B cell (primary cell): ENCODE measurements at regions of chr9 and their contacts with region 1.

Region 1: DNA sequence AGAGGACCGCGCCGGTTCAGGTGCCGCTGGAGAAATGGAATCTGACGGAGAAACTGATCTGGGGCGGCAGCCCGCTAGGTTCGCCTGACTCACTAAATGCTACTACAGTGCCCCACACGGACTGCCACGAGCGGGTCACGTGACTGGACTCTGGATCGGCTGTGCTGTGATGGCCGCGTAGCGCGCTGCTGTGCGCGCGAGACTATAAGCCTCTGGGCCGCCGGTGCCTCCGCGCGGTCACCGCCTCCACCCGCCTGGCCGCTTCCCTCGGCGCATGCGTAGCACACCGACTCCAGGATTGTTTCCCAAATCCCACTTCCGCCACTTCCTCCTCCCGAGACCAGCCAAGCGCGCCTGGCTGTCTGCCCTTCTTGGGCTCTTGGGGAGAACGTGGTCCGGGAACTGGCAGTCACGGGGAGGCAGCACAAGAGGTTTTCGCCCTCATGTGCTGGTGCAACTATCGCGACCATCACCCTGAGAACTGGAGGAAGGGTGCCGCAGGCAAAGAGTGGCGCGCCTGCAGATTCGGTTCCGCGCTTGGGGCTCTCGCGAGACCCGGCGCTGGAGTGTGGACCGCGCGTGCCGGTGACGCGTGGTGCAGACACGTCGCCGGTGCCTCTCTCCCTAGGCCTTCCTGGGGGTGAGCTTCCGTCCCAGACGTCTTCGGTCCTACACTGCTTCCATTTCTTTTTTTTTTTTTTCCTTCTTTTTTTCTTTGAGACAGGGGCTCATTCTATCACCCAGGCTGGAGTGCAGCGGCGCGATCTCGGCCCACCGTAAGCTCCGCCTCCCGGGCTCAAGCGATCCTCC is 35.8 kb upstream of the GLDC start:
- DNase-seq: peak; percentile 96
- ATAC-seq: peak; percentile 73
- H3K4me3 ChIP-seq: peak overlapping the region; percentile 69 to 89 (median 77)
- H3K4me3 Mint-ChIP-seq: peak overlapping the region; percentile 98
- H3K27ac ChIP-seq: peak overlapping the region; percentile 93 to 97
- H3K27ac Mint-ChIP-seq: peak overlapping the region; percentile 100
- H3K4me1 ChIP-seq: peaks cover 32 to 48% of the 10 kb centered on the region in 2 donors
- H3K4me1 Mint-ChIP-seq: peaks cover 29% of the 10 kb centered on the region
- H3K27me3 ChIP-seq: no peaks in the 10 kb centered on the region
- H3K27me3 Mint-ChIP-seq: no peaks in the 10 kb centered on the region
- CTCF ChIP-seq: no peak

Region 2: GRCh38 chr9:6015278-6016157 is 665.8 kb before region 1 on chr9 and contains the start of gene RANBP6:
- CTCF ChIA-PET with region 1: no interaction called
- POLR2A ChIA-PET with region 1: no interaction called
- intact Hi-C with region 1: loop called (anchors 1 kb)
- DNase-seq: peak; percentile 91
- ATAC-seq: peak; percentile 100
- H3K4me3 ChIP-seq: peak within 1 kb of the TSS; percentile 64 to 100 (median 73)
- H3K4me3 Mint-ChIP-seq: peak within 1 kb of the TSS; percentile 98
- H3K27ac ChIP-seq: peak within 1 kb of the TSS; percentile 65 to 83
- H3K27ac Mint-ChIP-seq: peak within 1 kb of the TSS; percentile 95
- H3K4me1 ChIP-seq: peaks cover 7 to 15% of the 10 kb centered on the region in 2 donors
- H3K4me1 Mint-ChIP-seq: peaks cover 34% of the 10 kb centered on the region
- H3K27me3 ChIP-seq: no peaks in the 10 kb centered on the region
- H3K27me3 Mint-ChIP-seq: no peaks in the 10 kb centered on the region
- CTCF ChIP-seq: no peak
- total RNA-seq, gene RANBP6: 25.0 and 25.9 TPM in 2 replicates

Region 3: DNA sequence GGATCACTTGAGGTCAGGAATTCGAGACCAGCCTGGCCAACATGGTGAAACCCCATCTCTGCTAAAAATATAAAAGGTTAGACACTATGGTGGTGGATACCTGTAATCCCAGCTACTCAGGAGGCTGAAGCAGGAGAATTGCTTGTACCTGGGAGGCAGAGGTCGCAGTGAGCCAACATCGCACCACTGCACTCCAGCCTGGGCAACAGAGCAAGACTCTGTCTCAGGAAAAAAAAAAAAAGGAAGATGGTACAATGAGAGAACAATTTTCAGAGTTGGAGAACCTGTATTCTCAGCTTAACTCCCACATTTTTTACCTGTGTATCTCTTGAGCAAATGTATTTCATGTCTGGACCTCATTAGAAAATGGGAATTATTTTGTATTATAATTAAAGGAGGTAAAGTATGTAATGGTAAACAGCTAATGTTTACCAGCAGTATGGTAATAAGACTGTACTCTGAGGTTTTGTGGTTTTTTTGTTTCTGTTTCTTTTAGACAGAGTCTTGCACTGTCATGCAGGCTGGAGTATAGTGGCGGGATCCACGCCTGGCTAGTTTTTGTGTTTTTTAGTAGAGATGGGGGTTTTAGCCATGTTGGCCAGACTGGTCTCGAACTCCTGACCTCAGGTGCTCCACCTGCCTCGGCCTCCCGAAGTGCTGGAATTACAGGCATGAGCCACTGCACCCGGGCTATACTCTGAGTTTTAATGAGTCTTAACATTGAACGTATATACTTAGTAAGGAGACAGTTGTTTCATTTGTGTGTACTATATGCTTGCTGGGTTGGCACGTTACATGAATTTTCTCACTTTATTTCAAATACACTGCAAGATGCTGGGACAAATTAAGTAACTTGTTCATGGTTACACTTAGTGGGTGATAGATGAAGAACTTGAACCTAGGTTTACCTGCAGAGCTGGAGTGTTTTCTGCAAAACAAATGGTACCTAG is 252.1 kb before region 1 on chr9:
- CTCF ChIA-PET with region 1: no interaction called
- POLR2A ChIA-PET with region 1: no interaction called
- intact Hi-C with region 1: loop called (anchors 5 kb)
- DNase-seq: peak; percentile 67
- ATAC-seq: peak; percentile 87
- H3K4me3 ChIP-seq: no peak overlapping the region
- H3K4me3 Mint-ChIP-seq: peak overlapping the region; percentile 67
- H3K27ac ChIP-seq: peak overlapping the region; percentile 37 to 60
- H3K27ac Mint-ChIP-seq: peak overlapping the region; percentile 87
- H3K4me1 ChIP-seq: peaks cover 51 to 59% of the 10 kb centered on the region in 2 donors
- H3K4me1 Mint-ChIP-seq: peaks cover 82% of the 10 kb centered on the region
- H3K27me3 ChIP-seq: no peaks in the 10 kb centered on the region
- H3K27me3 Mint-ChIP-seq: no peaks in the 10 kb centered on the region
- CTCF ChIP-seq: no peak

Region 4: GRCh38 chr9:6605202-6605601 is 76.2 kb before region 1 on chr9:
- CTCF ChIA-PET with region 1: no interaction called
- POLR2A ChIA-PET with region 1: no interaction called
- intact Hi-C with region 1: no loop called
- DNase-seq: peak; percentile 63
- ATAC-seq: peak; percentile 94
- H3K4me3 ChIP-seq: peak overlapping the region in 2 of 5 experiments; percentile 16 to 26
- H3K4me3 Mint-ChIP-seq: peak overlapping the region; percentile 76
- H3K27ac ChIP-seq: no peak overlapping the region
- H3K27ac Mint-ChIP-seq: no peak overlapping the region
- H3K4me1 ChIP-seq: peaks cover 15% of the 10 kb centered on the region in 2 donors
- H3K4me1 Mint-ChIP-seq: peaks cover 16% of the 10 kb centered on the region
- H3K27me3 ChIP-seq: no peaks in the 10 kb centered on the region
- H3K27me3 Mint-ChIP-seq: no peaks in the 10 kb centered on the region
- CTCF ChIP-seq: no peak

Region 5: DNA sequence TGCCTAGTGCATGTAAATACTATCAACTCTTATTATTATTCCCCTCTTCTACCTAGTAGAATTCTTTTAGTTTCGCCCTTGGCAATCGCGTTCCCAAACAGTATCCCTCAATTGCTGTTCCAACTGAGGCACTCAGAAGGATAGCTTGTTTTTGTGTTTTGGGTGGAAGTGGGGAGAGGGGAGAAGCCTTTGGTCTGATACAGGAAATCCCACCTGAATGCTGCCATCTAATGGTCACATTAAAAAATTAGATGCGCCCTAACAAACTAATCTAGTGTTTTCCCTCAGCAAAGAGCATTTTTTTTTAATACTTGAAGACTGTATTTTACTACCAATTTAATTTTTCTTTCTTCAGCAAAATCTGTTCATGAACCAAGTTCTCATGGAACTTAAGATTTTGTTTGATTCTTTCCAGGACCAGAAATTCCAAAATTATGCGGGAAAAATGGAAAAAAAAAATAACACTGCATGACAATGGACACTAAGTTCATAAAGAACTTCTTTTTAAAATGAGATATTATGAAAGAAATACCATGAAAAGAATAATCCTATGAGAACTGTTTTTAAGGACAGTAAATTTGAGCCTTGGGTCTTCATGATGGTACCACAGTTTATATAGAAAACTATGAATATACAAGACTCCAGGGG is 13.6 kb before region 1 on chr9:
- CTCF ChIA-PET with region 1: interaction called, 15 read pairs
- POLR2A ChIA-PET with region 1: no interaction called
- intact Hi-C with region 1: no loop called
- DNase-seq: peak; percentile 59
- ATAC-seq: peak; percentile 33
- H3K4me3 ChIP-seq: no peak overlapping the region
- H3K4me3 Mint-ChIP-seq: no peak overlapping the region
- H3K27ac ChIP-seq: no peak overlapping the region
- H3K27ac Mint-ChIP-seq: no peak overlapping the region
- H3K4me1 ChIP-seq: no peaks in the 10 kb centered on the region
- H3K4me1 Mint-ChIP-seq: peaks cover 4% of the 10 kb centered on the region
- H3K27me3 ChIP-seq: no peaks in the 10 kb centered on the region
- H3K27me3 Mint-ChIP-seq: no peaks in the 10 kb centered on the region
- CTCF ChIP-seq: peak; percentile 75

Region 6: DNA sequence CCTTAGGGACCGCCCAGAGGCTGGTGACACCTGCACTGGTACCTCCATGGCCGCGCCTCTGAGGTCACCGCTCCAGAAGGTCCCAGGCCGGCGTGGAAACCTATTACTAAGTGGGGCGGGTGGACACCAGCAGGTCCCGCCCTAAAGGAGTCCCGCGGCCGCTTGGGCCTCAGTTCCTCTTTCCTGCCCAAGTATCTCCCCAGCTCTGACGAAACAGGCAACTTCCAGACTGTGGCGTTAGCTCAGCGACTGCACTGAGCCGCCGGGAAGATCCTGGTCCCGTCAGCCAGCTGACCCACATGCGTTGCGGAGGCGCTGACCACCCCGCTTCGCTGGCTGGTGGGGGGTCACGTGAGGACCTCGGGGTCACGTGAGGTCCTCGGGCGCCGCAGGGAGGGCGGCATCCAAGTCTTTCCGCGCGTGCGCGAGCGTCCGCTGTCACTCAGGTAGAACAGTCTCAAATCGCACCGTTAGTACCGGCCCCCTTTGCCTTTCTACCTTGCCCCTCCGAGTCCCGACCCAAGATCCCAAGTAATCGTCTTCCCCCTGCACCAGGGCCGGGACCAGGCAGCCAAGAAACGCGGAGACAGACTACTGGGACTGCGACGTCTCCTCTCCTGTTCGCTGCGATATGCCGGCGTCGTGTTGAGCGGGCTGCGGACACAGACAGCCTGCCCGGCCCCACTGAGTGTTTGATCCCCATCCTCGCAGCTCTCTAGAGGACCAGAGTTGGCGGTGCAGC is 22.7 kb after region 1 on chr9:
- CTCF ChIA-PET with region 1: interaction called, 10 read pairs
- POLR2A ChIA-PET with region 1: interaction called, 17 read pairs
- intact Hi-C with region 1: loop called (anchors 1 kb)
- DNase-seq: peak; percentile 96
- ATAC-seq: peak; percentile 80
- H3K4me3 ChIP-seq: peak overlapping the region; percentile 70 to 98 (median 75)
- H3K4me3 Mint-ChIP-seq: peak overlapping the region; percentile 99
- H3K27ac ChIP-seq: peak overlapping the region; percentile 98 to 100
- H3K27ac Mint-ChIP-seq: peak overlapping the region; percentile 100
- H3K4me1 ChIP-seq: peaks cover 16 to 28% of the 10 kb centered on the region in 2 donors
- H3K4me1 Mint-ChIP-seq: peaks cover 29% of the 10 kb centered on the region
- H3K27me3 ChIP-seq: no peaks in the 10 kb centered on the region
- H3K27me3 Mint-ChIP-seq: no peaks in the 10 kb centered on the region
- CTCF ChIP-seq: no peak

Region 7: GRCh38 chr9:6757456-6758247 is 76.3 kb after region 1 on chr9 and contains the start of gene KDM4C:
- CTCF ChIA-PET with region 1: interaction called, 7 read pairs
- POLR2A ChIA-PET with region 1: interaction called, 116 read pairs
- intact Hi-C with region 1: loop called (anchors 1 kb)
- DNase-seq: peak; percentile 99
- ATAC-seq: peak; percentile 78
- H3K4me3 ChIP-seq: peak within 1 kb of the TSS; percentile 74 to 98 (median 96)
- H3K4me3 Mint-ChIP-seq: peak within 1 kb of the TSS; percentile 100
- H3K27ac ChIP-seq: peak within 1 kb of the TSS; percentile 94 to 100
- H3K27ac Mint-ChIP-seq: peak within 1 kb of the TSS; percentile 100
- H3K4me1 ChIP-seq: peaks cover 29 to 35% of the 10 kb centered on the region in 2 donors
- H3K4me1 Mint-ChIP-seq: peaks cover 32% of the 10 kb centered on the region
- H3K27me3 ChIP-seq: no peaks in the 10 kb centered on the region
- H3K27me3 Mint-ChIP-seq: no peaks in the 10 kb centered on the region
- CTCF ChIP-seq: no peak
- total RNA-seq, gene KDM4C: 141 and 155 TPM in 2 replicates

Region 8: GRCh38 chr9:7058473-7058872 is 377.1 kb after region 1 on chr9:
- CTCF ChIA-PET with region 1: no interaction called
- POLR2A ChIA-PET with region 1: no interaction called
- intact Hi-C with region 1: no loop called
- DNase-seq: no peak
- ATAC-seq: no peak
- H3K4me3 ChIP-seq: no peak overlapping the region
- H3K4me3 Mint-ChIP-seq: no peak overlapping the region
- H3K27ac ChIP-seq: no peak overlapping the region
- H3K27ac Mint-ChIP-seq: no peak overlapping the region
- H3K4me1 ChIP-seq: no peaks in the 10 kb centered on the region
- H3K4me1 Mint-ChIP-seq: no peaks in the 10 kb centered on the region
- H3K27me3 ChIP-seq: no peaks in the 10 kb centered on the region
- H3K27me3 Mint-ChIP-seq: no peaks in the 10 kb centered on the region
- CTCF ChIP-seq: no peak